H1 (cell line): ENCODE measurements at regions of chrX and their contacts with region 1.

Region 1: DNA sequence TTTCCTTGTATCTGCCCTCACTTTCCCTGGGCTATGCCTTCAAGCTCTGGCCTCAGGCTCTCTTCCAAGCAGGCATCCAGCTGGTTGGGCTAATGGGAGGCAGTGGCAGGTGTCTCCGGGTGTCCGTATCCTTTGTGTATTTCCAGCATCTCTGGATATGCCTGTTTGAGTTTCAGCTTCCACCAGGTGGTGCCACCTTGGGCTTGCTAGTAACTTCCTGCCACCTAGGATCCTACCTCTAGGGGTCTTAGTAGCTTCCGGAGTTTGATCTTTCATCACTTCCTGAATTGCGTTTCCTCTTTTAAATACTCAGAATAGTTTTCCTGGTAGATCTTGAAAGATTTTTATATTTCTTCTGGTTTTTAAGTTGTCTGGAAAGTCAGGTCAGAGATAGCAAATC is 23.2 kb upstream of the ANOS1 start:
- DNase-seq: no peak
- H3K4me3 ChIP-seq: no peak overlapping the region
- H3K27ac ChIP-seq: no peak overlapping the region
- H3K4me1 ChIP-seq: no peaks in the 10 kb centered on the region; a peak in 1 of 7 replicates
- H3K27me3 ChIP-seq: no peaks in the 10 kb centered on the region
- CTCF ChIP-seq: peak; percentile 22 to 99 (median 72)
- EP300 ChIP-seq: no peak
- POLR2A ChIP-seq: no peak
- RAD21 ChIP-seq: peak; percentile 26 to 34

Region 2: GRCh38 chrX:8815464-8816065 is 60.4 kb after region 1 on chrX:
- CTCF ChIA-PET with region 1: interaction called, 11 read pairs
- POLR2A ChIA-PET with region 1: no interaction called
- DNase-seq: no peak
- H3K4me3 ChIP-seq: no peak overlapping the region
- H3K27ac ChIP-seq: no peak overlapping the region
- H3K4me1 ChIP-seq: no peaks in the 10 kb centered on the region
- H3K27me3 ChIP-seq: no peaks in the 10 kb centered on the region
- CTCF ChIP-seq: peak in 2 of 3 experiments; percentile 62 to 65; a peak in 3 of 4 replicates
- EP300 ChIP-seq: no peak
- POLR2A ChIP-seq: no peak
- RAD21 ChIP-seq: peak; percentile 69 to 74